ENCODE measurements at regions of chr13 and their contacts with region 1.

Region 1: GRCh38 chr13:113519556-113519955 is 29.0 kb upstream of the DCUN1D2 start:
- DNase-seq: no peak
- H3K4me3 ChIP-seq: no peak overlapping the region
- H3K27ac ChIP-seq: no peak overlapping the region
- H3K4me1 ChIP-seq: no peaks in the 10 kb centered on the region
- H3K27me3 ChIP-seq: no peaks in the 10 kb centered on the region
- CTCF ChIP-seq: no peak

Region 2: DNA sequence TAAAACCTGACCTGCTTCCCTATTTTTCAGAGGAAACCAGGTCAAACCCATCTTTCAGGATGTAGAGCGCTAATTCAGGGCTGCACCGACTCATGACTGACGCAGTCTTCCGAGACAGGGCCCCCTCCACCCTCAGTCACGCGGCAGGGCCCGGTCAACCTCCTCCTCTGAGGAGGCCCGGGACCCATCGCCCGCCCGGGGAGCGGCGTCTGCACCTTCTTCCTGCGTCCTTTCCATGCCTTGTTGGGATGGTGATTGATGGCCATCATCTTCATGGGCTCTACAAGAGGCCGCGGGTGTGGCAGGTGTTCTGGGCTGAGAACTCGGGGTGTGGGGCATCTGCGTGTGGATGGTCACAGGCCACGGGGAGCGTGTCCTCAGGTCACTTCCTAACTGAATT is 181.6 kb before region 1 on chr13:
- CTCF ChIA-PET with region 1: interaction called, 15 read pairs
- POLR2A ChIA-PET with region 1: no interaction called
- intact Hi-C with region 1: no loop called
- DNase-seq: no peak
- H3K4me3 ChIP-seq: no peak overlapping the region
- H3K27ac ChIP-seq: no peak overlapping the region
- H3K4me1 ChIP-seq: no peaks in the 10 kb centered on the region
- H3K27me3 ChIP-seq: no peaks in the 10 kb centered on the region
- CTCF ChIP-seq: no peak